HCT116 (cell line): ENCODE measurements at regions of chr18 and their contacts with region 1.

Region 1: GRCh38 chr18:70288851-70289328 is at the start of gene SOCS6:
- DNase-seq: no peak
- ATAC-seq: peak; percentile 37
- H3K4me3 ChIP-seq: peak within 1 kb of the TSS; percentile 75 to 86
- H3K27ac ChIP-seq: peak within 1 kb of the TSS; percentile 99
- H3K4me1 ChIP-seq: peaks cover 59 to 78% of the 10 kb centered on the region in 2 experiments
- H3K27me3 ChIP-seq: no peaks in the 10 kb centered on the region
- CTCF ChIP-seq: no peak
- POLR2A ChIP-seq: peak; percentile 53
- RAD21 ChIP-seq: no peak
- total RNA-seq, gene SOCS6: 53.4 TPM

Region 2: GRCh38 chr18:70195852-70196434 is 92.9 kb before region 1 on chr18:
- CTCF ChIA-PET with region 1: interaction called, 3 read pairs
- POLR2A ChIA-PET with region 1: interaction called, 4 read pairs
- RAD21 ChIA-PET with region 1: no interaction called
- intact Hi-C with region 1: loop called (anchors 5 kb)
- DNase-seq: no peak
- ATAC-seq: peak; percentile 80
- H3K4me3 ChIP-seq: no peak overlapping the region
- H3K27ac ChIP-seq: peak overlapping the region; percentile 43
- H3K4me1 ChIP-seq: peaks cover 20 to 31% of the 10 kb centered on the region in 2 experiments
- H3K27me3 ChIP-seq: no peaks in the 10 kb centered on the region
- CTCF ChIP-seq: peak; percentile 76 to 91 (median 79)
- POLR2A ChIP-seq: no peak
- RAD21 ChIP-seq: peak; percentile 88

Region 3: DNA sequence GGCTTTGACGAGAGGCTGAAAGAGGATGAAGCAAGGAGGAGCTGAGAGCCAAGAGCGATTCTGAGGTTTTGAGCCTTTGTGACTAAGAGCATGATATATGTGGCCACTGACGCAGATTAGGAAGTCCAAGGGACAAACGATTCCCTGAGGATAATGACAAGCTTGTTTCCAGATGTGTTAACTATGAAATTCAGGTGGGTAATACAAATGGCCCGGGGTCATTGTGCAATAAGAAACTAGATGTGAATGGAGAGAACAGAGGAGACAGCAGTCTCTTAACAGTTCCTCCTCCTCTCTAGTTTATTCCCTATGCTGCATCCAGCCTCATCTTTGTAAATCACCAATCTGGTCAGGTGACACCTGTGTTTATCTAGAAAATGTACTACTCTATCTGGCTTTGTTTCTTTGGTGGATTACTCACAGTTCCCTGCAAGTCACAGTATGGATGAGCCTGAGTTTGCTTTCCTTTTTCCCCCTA is 84.2 kb after region 1 on chr18:
- CTCF ChIA-PET with region 1: no interaction called
- POLR2A ChIA-PET with region 1: interaction called, 11 read pairs
- RAD21 ChIA-PET with region 1: no interaction called
- intact Hi-C with region 1: no loop called
- DNase-seq: peak; percentile 97
- ATAC-seq: peak; percentile 67
- H3K4me3 ChIP-seq: peak overlapping the region in 1 of 2 experiments; percentile 27; a peak in 2 of 4 replicates
- H3K27ac ChIP-seq: peak overlapping the region; percentile 92
- H3K4me1 ChIP-seq: peaks cover 86 to 95% of the 10 kb centered on the region in 2 experiments
- H3K27me3 ChIP-seq: no peaks in the 10 kb centered on the region
- CTCF ChIP-seq: no peak
- POLR2A ChIP-seq: no peak
- RAD21 ChIP-seq: no peak

Region 4: GRCh38 chr18:70421471-70422390 is 132.8 kb after region 1 on chr18:
- CTCF ChIA-PET with region 1: no interaction called
- POLR2A ChIA-PET with region 1: interaction called, 10 read pairs
- RAD21 ChIA-PET with region 1: interaction called in 1 of 2 experiments, 3 read pairs
- intact Hi-C with region 1: loop called (anchors 1 kb)
- DNase-seq: peak; percentile 94
- ATAC-seq: peak; percentile 58
- H3K4me3 ChIP-seq: peak overlapping the region in 1 of 2 experiments; percentile 17; a peak in 2 of 4 replicates
- H3K27ac ChIP-seq: peak overlapping the region; percentile 99
- H3K4me1 ChIP-seq: peaks cover 82 to 97% of the 10 kb centered on the region in 2 experiments
- H3K27me3 ChIP-seq: no peaks in the 10 kb centered on the region
- CTCF ChIP-seq: no peak
- POLR2A ChIP-seq: no peak
- RAD21 ChIP-seq: no peak